GM13976 (cell line): ENCODE measurements at regions of chr5 and their contacts with region 1.

Region 1: DNA sequence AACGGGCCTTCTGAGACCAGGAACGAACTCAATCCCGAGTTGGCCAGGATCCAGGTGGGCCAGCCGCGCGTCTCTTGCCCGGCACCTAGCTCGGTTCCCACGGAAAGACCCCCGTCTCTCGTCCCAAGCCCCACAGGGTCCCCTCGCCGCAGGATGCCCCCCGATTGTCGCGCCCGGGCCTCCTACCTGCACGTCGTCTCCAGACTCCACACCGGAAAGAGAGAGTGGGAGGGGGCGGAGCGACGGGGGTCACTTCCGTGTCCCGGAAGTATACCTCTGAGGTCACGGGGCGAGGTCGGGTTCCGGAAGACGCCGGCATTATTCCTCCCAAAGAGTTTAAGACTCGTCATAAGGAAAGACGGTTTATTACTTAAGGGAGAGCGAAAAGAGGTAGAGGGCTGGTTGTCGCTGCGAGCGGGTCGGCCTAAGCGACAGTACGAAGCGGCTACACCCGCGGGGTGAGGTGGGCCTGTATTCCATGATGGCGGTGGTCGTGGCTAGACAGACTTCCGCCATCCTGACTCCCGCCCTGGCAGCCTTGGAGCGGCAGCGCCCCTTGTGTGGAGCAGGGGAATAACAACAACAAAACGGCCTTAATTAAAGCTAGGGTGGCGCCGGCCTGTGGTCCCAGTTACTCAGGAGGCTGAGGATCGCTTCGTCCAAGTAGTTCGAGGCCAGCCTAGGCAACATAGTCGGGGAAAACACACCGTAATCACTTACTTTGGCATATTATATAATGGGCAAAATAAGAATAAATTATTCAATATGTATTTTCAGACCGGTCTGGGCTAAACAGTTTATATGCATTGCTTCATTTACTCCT is at the start of gene RPS14:
- DNase-seq: peak; percentile 97
- CTCF ChIP-seq: peak; percentile 97

Region 2: DNA sequence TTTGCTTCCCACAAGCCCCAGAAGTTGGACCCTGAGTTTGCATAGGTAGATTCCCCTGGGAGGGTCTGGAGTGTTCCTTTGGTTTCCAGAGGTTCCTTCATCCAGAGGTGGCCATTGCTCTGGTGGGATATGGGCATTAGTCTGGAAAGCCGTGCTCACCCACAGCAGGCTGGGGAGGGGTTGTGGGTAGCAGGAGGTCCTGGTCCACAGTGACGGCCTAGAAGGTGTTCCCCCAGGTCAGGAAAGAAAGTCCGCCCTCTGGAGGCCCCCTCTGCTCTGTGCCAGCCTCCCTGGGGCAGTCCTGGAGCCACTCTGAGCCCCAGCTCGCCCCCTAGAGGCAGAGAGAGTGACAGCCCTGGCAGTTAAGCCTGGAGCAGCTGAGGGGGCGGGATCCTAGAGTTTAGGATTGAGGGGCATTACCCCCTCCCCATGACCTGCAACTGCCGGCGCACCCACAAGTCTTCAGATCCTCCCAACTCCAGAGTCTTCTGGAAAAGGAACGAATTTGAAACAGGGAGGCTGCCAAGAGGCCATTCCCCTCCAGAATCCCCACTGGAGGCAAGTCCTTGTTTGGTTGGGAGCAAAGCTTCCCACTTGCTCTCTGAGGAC is 95.0 kb after region 1 on chr5:
- in situ Hi-C with region 1: loop called (anchors 10 kb)
- DNase-seq: peak; percentile 95
- CTCF ChIP-seq: peak; percentile 89

Region 3: DNA sequence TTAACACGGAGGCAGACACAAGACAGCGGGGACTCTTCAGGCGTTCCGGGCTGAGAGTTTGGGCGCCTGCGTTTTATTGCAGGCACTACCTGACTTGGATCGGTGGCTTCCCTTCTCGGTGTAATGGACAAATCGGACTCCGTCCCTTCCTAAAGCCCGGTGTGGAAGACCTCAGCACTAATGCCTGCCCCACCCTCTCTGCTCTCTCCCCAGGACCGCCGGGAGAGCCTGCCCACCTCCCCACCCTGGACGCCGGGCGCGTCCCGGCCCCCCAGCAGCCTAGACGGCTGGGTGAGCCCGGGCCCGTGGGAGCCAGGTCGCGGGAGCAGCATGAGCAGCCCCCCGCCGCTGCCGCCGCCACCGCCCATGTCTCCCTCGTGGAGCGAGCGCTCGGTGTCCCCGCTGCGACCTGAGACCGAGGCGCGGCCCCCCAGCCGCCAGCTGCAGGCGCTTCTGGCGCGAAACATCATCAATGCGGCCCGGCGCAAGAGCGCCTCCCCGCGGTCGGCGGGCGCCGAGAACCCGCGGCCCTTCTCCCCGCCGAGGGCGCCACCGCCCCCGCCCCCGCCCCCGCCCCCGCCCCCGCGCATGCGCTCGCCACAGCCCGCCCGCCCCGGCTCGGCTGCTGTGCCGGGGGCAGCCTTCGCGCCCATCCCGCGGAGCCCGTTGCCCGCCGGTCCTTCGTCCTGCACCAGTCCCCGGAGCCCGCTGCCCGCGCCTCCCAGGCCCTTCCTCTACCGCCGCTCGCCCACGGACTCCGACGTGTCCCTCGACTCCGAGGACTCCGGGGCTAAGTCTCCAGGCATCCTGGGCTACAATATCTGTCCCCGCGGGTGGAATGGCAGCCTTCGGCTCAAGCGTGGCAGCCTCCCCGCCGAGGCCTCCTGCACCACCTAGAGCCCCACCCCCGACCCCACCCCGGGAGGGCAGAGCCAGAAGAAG is 206.7 kb after region 1 on chr5:
- in situ Hi-C with region 1: loop called (anchors 25 kb)
- DNase-seq: peak; percentile 93
- CTCF ChIP-seq: peak; percentile 78